GM10248 (cell line): ENCODE measurements at regions of chr14 and their contacts with region 1.

Region 1: DNA sequence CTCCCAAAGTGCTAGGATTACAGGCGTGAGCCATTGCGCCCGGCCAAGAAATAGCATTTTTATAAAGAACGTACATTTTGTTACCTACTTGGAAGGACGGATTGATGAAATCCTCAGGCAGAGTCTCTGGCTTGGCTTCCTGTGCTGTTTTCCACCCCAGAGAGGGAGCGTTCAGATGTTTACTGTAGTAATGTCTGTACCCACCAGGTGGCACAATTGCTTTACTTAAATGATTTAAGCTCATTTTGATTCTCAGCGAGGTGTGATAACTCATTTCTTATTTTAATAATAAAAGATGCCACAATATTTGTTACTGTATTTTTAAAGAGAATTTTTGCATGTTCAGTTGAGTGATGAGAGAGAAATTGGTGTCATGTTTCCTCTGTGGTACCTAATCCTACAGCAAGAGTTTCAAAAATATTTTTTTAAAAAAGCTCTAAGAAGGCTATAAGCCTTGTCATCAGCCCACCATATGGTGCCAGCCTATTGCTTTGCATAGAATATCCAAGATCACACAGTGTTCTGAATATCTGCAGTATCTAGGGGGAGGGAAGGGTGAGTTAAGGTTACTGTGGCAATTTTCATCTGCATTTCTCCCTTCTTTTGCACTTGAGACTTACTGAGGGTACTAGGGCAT is 82.6 kb upstream of the TRAF3 start:
- DNase-seq: peak; percentile 62
- CTCF ChIP-seq: peak; percentile 77

Region 2: GRCh38 chr14:102187058-102187457 is 507.6 kb before region 1 on chr14:
- CTCF ChIA-PET with region 1: no interaction called
- POLR2A ChIA-PET with region 1: no interaction called
- DNase-seq: no peak
- CTCF ChIP-seq: no peak

Region 3: GRCh38 chr14:102493096-102493495 is 201.6 kb before region 1 on chr14:
- CTCF ChIA-PET with region 1: no interaction called
- POLR2A ChIA-PET with region 1: no interaction called
- DNase-seq: no peak
- CTCF ChIP-seq: no peak

Region 4: DNA sequence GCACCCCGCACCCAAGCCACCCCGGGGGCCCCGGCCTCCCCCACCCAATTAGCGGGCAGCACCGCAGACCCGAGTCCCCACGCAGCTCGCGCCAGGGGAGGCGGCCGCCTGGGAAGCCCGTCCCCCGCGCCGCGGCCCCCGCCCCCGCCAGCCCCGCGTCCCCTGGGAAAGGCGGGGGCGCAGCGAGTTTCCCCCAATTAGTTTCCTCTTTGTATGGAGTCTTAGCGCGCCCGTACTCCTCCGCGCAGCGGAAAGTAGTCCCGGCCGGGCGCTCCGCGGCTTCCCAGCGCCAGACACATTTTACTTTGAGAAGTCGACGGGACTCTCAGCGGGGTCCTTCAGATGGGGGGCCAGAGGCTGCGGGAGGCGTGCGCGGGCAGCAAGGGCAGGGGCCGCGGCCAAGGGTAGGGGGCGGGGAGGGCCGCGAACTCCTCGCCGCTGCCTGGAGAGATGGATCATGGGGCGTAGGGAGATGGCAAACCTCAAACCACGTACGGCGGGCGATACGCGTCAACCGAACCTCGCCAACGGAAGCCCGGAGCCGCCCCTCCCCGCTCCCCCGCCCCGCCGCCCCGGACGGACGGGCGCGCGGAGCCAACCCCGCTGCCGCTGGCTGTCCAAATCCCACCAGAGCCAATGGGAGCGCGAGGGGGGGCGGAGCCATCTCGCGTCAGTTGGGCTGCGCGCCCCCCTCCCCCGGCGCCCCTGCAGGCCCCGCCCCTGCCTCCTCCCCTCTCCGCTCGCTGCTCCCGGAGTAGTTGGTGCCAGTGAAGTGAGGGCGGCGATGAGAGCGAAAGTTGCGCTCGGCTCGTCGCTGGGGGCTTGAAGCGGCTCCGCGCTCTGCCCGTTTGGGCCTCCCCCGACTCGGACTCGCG is 102.5 kb before region 1 on chr14 and contains the start of gene RCOR1:
- CTCF ChIA-PET with region 1: interaction called, 21 read pairs
- POLR2A ChIA-PET with region 1: no interaction called
- DNase-seq: peak; percentile 99
- CTCF ChIP-seq: no peak

Region 5: DNA sequence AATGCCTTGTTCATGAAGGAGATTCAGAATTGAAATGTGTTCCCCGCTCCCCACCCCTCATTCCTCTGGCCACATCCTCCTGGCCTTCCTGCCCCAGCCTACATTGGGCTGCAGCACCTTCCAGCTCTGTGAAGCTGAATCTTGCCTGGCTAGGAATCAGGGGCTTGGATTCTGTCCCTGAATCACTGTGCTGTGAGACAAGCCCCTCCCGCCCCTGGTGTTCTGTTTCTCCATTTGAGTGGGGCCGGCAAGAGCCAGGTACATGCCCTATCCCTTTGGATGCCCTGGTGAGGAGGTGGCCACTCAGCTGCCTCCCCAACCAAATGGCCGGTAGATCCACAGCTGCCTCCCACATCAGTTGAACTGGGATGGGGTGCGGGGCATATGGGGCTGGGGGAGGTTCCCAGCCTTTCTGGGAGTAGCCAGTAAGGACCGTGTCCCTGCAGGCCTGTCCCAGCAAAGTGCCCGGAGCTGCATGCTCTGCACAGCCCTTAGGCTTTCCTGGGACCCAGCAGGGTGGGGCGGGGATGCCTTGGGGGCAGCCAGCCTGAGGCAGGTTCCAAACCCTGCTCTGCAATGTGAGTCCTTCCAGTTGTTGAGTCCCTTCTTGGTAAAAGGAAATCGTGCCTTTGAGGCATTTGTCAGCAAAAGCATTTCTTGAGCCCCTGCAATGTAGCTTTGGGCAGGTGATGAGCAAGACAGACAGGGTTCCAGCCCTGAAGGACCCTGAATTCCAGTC is 44.3 kb after region 1 on chr14:
- CTCF ChIA-PET with region 1: interaction called, 10 read pairs
- POLR2A ChIA-PET with region 1: no interaction called
- DNase-seq: no peak
- CTCF ChIP-seq: no peak

Region 6: GRCh38 chr14:102785584-102785942 is 90.9 kb after region 1 on chr14:
- CTCF ChIA-PET with region 1: interaction called, 21 read pairs
- POLR2A ChIA-PET with region 1: no interaction called
- DNase-seq: no peak
- CTCF ChIP-seq: peak; percentile 43

Region 7: DNA sequence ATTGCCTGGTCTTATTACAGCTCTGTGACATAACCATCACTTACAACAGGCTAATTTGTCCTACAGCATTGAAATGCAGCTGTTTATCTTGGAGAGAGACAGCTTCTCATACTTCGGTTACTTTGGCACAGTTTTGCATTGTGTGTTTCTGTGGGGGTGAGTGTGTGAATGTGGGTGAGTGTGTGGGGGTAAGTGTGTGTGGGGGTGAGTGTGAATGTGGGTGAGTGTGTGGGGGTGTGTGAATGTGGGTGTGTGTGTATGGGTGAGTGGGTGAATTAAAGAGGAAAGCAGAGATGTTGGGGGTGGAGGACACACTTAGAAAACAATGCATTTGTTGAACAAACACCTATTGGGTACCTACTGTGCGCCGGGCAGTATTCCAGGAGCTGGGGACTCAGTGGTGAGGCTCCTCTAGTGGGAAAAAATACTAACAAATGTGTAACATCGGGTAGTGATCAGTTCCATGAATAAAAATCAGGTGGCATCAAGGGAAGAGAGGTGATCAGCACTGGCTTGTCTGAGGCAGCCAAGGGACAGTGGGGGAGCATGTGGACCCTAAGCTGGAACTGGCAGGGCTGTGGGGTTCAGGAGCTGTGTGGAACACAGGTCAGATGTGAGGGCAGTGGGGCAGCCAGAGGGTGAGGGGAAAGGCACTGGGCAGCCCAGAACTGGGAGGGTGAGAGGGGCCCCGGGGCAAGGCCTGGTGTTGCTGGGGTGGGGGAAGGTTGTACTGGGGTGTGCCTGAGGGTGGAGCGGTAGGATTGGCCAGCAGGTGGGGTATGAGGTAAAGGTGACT is 183.7 kb after region 1 on chr14:
- CTCF ChIA-PET with region 1: interaction called, 15 read pairs
- POLR2A ChIA-PET with region 1: no interaction called
- DNase-seq: no peak
- CTCF ChIP-seq: no peak

Region 8: DNA sequence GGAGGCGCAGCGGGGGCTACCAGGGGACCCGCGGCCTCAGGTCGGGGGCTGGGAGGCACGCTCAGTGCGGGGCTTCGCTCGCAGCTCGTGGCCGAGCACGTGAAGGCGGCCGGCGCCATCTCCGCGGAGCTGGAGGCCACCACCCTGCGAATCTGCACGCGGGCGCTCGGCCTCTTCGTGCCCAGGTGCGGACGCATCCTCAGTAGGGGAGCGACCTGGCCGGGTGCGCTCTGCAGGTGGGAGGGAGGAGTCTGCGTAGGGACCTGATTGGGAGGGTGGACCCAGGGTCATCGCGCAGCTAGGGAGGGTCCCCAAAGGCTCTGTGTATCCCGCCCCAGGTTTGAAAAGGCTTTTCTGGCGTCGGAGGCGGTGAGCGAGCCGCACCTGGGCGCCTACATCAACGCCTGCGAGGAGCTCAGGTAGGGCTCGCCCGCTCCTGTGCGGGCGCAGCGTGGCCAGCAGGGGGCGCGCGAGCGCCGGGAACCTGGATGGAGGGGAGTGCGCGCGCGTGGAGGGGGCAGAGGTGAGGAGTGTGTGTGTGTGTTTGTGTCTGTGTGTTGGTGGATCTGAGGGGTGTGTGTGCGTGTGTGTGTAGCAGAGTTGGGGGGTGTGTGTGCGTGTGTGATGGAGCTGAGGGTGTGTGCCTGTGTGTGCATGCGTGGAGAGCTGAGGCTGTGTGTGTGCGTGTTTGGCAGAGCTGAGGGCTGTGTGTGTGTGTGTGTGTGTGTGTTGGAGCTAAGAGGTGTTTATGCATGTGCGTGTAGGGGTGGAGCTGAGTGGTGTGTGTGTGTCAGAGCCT is 410.2 kb after region 1 on chr14:
- CTCF ChIA-PET with region 1: interaction called, 15 read pairs
- POLR2A ChIA-PET with region 1: no interaction called
- DNase-seq: peak; percentile 84
- CTCF ChIP-seq: peak; percentile 99